Panc1 (cell line): ENCODE measurements at regions of chr1 and their contacts with region 1.

Region 1: DNA sequence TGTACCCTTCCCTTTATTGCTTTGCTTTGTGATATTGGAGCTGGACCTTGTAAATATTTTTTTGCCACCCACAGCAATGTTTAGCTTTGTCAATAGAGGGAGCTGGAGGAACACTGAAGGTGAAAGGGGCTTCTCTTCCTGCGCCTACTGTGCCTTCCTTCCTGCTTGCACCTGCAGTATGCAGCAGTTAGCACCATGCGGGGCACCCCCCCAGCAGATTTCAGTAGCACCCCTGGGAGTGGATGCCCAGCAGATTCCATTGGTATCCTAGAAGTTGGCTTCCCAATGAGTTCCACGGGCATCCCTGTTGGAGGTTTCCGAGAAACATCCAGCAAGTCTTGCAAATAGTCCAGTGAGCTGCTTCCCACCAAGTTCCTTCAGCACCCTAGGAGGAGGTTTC is 25.6 kb downstream of the S100A10 start:
- DNase-seq: no peak
- ATAC-seq: peak; percentile 71
- H3K4me3 ChIP-seq: no peak overlapping the region
- H3K27ac ChIP-seq: peak overlapping the region; percentile 93
- H3K4me1 ChIP-seq: peaks cover 61% of the 10 kb centered on the region
- H3K27me3 ChIP-seq: no peaks in the 10 kb centered on the region
- CTCF ChIP-seq: peak; percentile 86

Region 2: GRCh38 chr1:151846686-151847237 is 121.3 kb before region 1 on chr1:
- CTCF ChIA-PET with region 1: no interaction called
- POLR2A ChIA-PET with region 1: no interaction called
- in situ Hi-C with region 1: no loop called
- intact Hi-C with region 1: no loop called
- DNase-seq: no peak
- ATAC-seq: no peak
- H3K4me3 ChIP-seq: no peak overlapping the region
- H3K27ac ChIP-seq: no peak overlapping the region
- H3K4me1 ChIP-seq: no peaks in the 10 kb centered on the region
- H3K27me3 ChIP-seq: no peaks in the 10 kb centered on the region
- CTCF ChIP-seq: no peak

Region 3: DNA sequence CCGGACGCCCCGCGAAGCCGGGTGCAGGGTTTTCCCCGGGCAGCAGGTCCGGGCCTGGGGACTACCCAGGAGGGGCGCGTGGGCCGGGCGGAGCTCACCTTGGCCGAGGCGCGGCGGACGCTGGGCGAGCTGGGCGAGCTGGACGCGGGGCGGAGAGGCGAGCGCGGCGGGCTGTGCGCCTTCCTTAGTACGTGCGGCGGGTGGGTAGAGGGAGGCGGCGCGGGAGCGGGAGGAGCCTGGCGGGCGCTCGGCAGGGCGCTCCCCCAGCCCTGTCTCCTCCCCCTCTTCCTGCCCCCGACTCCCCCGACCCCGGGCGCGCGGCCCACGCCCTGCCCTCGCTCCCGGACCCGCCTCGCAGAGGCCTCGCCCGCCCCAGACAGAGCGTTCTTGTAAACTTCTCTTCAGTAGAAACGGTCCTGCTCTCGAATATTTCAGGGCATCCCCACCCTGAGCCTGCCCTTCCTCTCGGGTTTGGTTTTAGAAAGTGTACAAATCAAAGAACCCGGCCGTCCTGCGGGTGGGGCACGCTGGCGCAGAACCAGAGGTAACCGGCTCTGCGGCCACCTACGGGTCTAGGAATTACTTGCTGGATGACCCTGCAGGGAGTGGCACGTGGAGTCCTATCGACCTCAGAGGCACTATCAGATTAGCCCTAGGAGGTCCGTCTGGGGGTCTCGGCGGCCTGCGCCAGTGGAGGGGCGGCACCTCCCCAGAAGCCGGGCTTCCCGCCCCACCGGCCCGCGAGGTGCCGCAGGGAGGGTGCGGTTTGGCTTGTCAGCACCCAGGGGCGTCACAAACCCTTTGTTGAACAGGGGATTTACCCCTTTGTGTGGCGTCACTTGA is 25.8 kb after region 1 on chr1 and contains the start of gene S100A10:
- CTCF ChIA-PET with region 1: interaction called, 6 read pairs
- POLR2A ChIA-PET with region 1: interaction called, 15 read pairs
- in situ Hi-C with region 1: no loop called
- intact Hi-C with region 1: loop called (anchors 1 kb)
- DNase-seq: no peak
- ATAC-seq: peak; percentile 70
- H3K4me3 ChIP-seq: peak within 1 kb of the TSS; percentile 67 to 83
- H3K27ac ChIP-seq: peak within 1 kb of the TSS; percentile 99
- H3K4me1 ChIP-seq: peaks cover 46% of the 10 kb centered on the region
- H3K27me3 ChIP-seq: no peaks in the 10 kb centered on the region
- CTCF ChIP-seq: no peak
- total RNA-seq, gene S100A10: 1,621 TPM